GM12878 (cell line): ENCODE measurements at regions of chr7 and their contacts with region 1.

Region 1: DNA sequence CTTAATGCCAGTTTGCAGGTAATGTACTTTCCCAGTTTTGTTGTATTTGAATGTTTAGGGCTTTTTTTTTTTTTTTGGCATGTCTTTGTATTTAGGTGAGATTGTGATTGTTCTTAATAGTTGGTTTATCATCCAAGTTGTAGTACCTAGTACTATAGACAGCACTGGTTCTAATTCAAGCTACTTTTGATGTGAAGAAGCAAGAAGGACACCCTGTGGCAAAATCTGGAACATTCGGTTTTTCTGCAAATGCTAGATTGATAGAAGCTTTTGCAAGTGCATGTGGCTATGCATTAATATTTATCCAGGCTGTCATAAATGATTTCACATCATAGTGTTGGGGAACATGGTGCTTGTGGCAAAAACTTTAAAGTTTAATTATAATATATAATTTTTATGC is 248.9 kb downstream of the FOXP2 start:
- DNase-seq: peak; percentile 15
- ATAC-seq: peak; percentile 77
- H3K4me3 ChIP-seq: no peak overlapping the region
- H3K27ac ChIP-seq: no peak overlapping the region
- H3K4me1 ChIP-seq: no peaks in the 10 kb centered on the region
- H3K27me3 ChIP-seq: no peaks in the 10 kb centered on the region
- CTCF ChIP-seq: peak; percentile 30 to 55 (median 38); a peak in 5 of 6 replicates
- EP300 ChIP-seq: no peak
- POLR2A ChIP-seq: no peak
- RAD21 ChIP-seq: peak; percentile 80

Region 2: DNA sequence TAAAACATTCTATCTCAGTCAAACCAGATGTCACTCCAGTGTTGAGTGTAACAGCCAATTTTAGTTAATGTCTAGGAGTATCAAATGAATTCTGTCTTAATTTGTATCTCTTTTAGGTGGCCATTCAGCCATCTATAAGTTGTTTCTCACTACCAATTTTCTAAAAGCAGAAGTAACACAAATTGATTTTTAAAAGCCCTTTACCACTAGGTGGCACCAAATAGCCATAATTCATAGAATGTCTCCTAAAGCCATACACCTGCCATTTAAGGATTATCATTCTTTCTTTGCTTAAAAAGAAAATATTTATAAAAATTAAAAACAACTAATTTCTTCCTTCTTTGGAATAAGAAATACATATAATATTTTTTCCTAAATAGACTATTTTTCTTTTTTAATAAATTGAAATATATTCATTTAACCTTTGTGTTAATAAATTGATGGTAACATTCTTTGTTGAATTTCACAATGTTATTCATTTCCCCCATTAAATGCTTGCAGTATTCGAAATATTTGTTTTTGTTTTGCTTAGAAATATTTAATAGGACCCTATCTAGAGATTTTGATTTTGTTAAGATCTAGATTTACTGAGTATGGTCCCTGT is 636.9 kb before region 1 on chr7:
- CTCF ChIA-PET with region 1: interaction called, 14 read pairs
- POLR2A ChIA-PET with region 1: no interaction called
- RAD21 ChIA-PET with region 1: interaction called, 4 read pairs
- SMC1A ChIA-PET with region 1: interaction called, 9 read pairs
- in situ Hi-C with region 1: loop called (anchors 25 kb)
- intact Hi-C with region 1: loop called (anchors 5 kb)
- DNase-seq: no peak
- ATAC-seq: peak; percentile 82
- H3K4me3 ChIP-seq: no peak overlapping the region
- H3K27ac ChIP-seq: no peak overlapping the region
- H3K4me1 ChIP-seq: no peaks in the 10 kb centered on the region
- H3K27me3 ChIP-seq: no peaks in the 10 kb centered on the region; a peak in 1 of 4 replicates
- CTCF ChIP-seq: peak; percentile 31 to 74 (median 32); a peak in 4 of 6 replicates
- EP300 ChIP-seq: no peak
- POLR2A ChIP-seq: no peak
- RAD21 ChIP-seq: peak; percentile 81

Region 3: GRCh38 chr7:114334989-114335388 is 328.5 kb before region 1 on chr7:
- CTCF ChIA-PET with region 1: no interaction called
- POLR2A ChIA-PET with region 1: no interaction called
- RAD21 ChIA-PET with region 1: no interaction called
- SMC1A ChIA-PET with region 1: no interaction called
- in situ Hi-C with region 1: no loop called
- intact Hi-C with region 1: loop called (anchors 10 kb)
- DNase-seq: no peak
- ATAC-seq: no peak
- H3K4me3 ChIP-seq: no peak overlapping the region
- H3K27ac ChIP-seq: no peak overlapping the region
- H3K4me1 ChIP-seq: no peaks in the 10 kb centered on the region
- H3K27me3 ChIP-seq: no peaks in the 10 kb centered on the region
- CTCF ChIP-seq: no peak
- EP300 ChIP-seq: no peak
- POLR2A ChIP-seq: no peak
- RAD21 ChIP-seq: no peak

Region 4: DNA sequence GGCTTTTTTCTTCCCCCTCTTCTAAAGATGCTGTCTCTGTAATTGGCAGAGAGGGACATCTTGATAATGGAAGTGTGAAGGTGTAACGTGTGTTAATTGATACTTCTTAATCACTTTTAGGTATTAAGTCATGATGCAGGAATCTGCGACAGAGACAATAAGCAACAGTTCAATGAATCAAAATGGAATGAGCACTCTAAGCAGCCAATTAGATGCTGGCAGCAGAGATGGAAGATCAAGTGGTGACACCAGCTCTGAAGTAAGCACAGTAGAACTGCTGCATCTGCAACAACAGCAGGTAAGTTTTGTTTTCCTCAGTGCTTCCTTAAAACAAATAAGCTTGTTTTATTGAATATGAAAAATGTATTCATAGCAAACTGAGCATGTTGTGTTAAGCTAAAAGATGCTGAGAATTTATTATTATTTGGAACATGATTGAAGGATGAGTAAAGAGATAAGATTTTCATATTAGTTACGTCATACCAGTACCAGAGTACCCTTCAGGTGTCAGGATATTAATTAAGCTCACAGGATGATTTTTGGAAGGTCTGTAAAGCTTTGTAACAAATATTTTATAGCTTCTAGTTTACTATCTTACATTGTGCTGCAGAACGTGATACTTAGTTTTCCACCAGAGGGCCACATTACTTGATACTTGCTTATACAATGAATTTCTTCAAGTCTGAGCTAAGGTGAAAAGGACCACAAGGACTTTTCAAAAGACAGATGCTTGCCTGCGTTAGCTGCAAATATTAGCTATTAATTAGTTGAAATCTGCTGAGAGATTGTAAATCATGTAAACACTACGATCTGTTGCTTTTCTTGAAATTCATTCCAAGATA is 236.9 kb before region 1 on chr7:
- CTCF ChIA-PET with region 1: interaction called, 48 read pairs
- POLR2A ChIA-PET with region 1: interaction called, 4 read pairs
- RAD21 ChIA-PET with region 1: interaction called, 24 read pairs
- SMC1A ChIA-PET with region 1: interaction called, 29 read pairs
- in situ Hi-C with region 1: no loop called
- intact Hi-C with region 1: loop called (anchors 2 kb)
- DNase-seq: no peak
- ATAC-seq: peak; percentile 69
- H3K4me3 ChIP-seq: no peak overlapping the region
- H3K27ac ChIP-seq: no peak overlapping the region
- H3K4me1 ChIP-seq: no peaks in the 10 kb centered on the region
- H3K27me3 ChIP-seq: no peaks in the 10 kb centered on the region
- CTCF ChIP-seq: no peak; a peak in 1 of 6 replicates
- EP300 ChIP-seq: no peak
- POLR2A ChIP-seq: no peak
- RAD21 ChIP-seq: peak; percentile 54

Region 5: GRCh38 chr7:114645451-114645850 is 18.1 kb before region 1 on chr7:
- CTCF ChIA-PET with region 1: interaction called, 5 read pairs
- POLR2A ChIA-PET with region 1: no interaction called
- RAD21 ChIA-PET with region 1: interaction called, 8 read pairs
- SMC1A ChIA-PET with region 1: interaction called, 19 read pairs
- in situ Hi-C with region 1: no loop called
- intact Hi-C with region 1: no loop called
- DNase-seq: no peak
- ATAC-seq: peak; percentile 75
- H3K4me3 ChIP-seq: no peak overlapping the region
- H3K27ac ChIP-seq: no peak overlapping the region
- H3K4me1 ChIP-seq: no peaks in the 10 kb centered on the region
- H3K27me3 ChIP-seq: no peaks in the 10 kb centered on the region; a peak in 1 of 4 replicates
- CTCF ChIP-seq: no peak
- EP300 ChIP-seq: no peak
- POLR2A ChIP-seq: no peak
- RAD21 ChIP-seq: no peak